ENCODE measurements at regions of chr4 and their contacts with region 1.

Region 1: GRCh38 chr4:39458505-39459300 is at the starts of genes LIAS and RPL9:
- DNase-seq: peak; percentile 91 to 99 (median 95)
- ATAC-seq: peak; percentile 95
- H3K4me3 ChIP-seq: peak within 1 kb of the TSS; percentile 82
- H3K27ac ChIP-seq: peak within 1 kb of the TSS; percentile 93
- H3K4me1 ChIP-seq: peaks cover 3 to 12% of the 10 kb centered on the region in 2 experiments; a peak in 4 of 5 replicates
- H3K27me3 ChIP-seq: no peaks in the 10 kb centered on the region
- CTCF ChIP-seq: no peak; a peak in 1 of 6 replicates
- EP300 ChIP-seq: peak; percentile 56; the same call in 1 of the 2 replicates
- POLR2A ChIP-seq: peak; percentile 99
- RAD21 ChIP-seq: no peak
- polyA plus RNA-seq, gene LIAS: 40.3 to 56.6 TPM
- polyA plus RNA-seq, gene RPL9: 3,844 to 3,942 TPM

Region 2: DNA sequence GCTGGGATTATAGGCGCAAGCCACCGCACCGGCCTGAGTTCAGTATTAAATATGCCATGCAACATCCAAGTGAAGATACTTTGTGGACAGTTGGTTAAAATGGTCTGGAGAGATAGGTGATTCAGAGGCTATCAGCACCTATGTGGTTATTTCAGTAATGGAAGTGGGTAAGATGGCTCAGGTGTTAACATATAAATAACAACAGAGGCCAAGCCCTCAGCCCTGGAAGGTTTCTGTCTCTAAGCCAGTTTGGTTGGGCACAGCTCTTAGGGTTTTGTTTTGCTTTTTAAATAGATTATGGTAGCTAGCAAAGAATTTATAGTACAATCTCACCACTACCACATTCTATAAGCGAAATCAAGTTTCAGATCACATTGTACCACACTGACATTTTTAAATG is 574.4 kb before region 1 on chr4:
- CTCF ChIA-PET with region 1: no interaction called
- POLR2A ChIA-PET with region 1: no interaction called
- in situ Hi-C with region 1: no loop called
- intact Hi-C with region 1: no loop called
- DNase-seq: no peak
- ATAC-seq: no peak
- H3K4me3 ChIP-seq: no peak overlapping the region
- H3K27ac ChIP-seq: no peak overlapping the region
- H3K4me1 ChIP-seq: no peaks in the 10 kb centered on the region; a peak in 1 of 5 replicates
- H3K27me3 ChIP-seq: no peaks in the 10 kb centered on the region
- CTCF ChIP-seq: no peak
- EP300 ChIP-seq: no peak
- POLR2A ChIP-seq: no peak
- RAD21 ChIP-seq: no peak

Region 3: GRCh38 chr4:38894340-38894982 is 564.2 kb before region 1 on chr4:
- CTCF ChIA-PET with region 1: no interaction called
- POLR2A ChIA-PET with region 1: no interaction called
- in situ Hi-C with region 1: no loop called
- intact Hi-C with region 1: loop called (anchors 10 kb)
- DNase-seq: no peak
- ATAC-seq: no peak
- H3K4me3 ChIP-seq: no peak overlapping the region
- H3K27ac ChIP-seq: no peak overlapping the region
- H3K4me1 ChIP-seq: no peaks in the 10 kb centered on the region
- H3K27me3 ChIP-seq: no peaks in the 10 kb centered on the region
- CTCF ChIP-seq: 0 out of 6 replicates have a peak, but pooled peaks of 2 of the 3 experiments have one; percentile 2
- EP300 ChIP-seq: no peak
- POLR2A ChIP-seq: no peak
- RAD21 ChIP-seq: no peak

Region 4: DNA sequence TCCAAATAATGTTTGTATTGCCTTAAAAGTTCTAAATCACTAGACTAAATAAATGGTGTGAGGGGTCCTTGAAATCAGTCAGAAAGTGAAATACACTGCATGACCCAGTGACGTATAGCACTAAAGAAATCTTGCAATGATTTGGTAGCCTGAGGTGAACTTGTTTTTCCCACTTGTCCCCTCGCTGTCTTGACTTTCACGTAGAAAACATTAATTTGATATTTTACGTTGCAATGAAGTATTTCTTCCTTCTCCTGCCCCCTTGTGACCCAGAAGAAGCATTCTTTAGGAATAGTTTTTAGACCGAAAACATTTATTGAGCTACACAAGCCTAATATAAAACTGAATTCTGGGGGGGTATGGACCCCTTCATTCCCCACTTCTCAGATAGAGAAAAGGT is 48.3 kb before region 1 on chr4:
- CTCF ChIA-PET with region 1: no interaction called
- POLR2A ChIA-PET with region 1: no interaction called
- in situ Hi-C with region 1: no loop called
- intact Hi-C with region 1: no loop called
- DNase-seq: no peak
- ATAC-seq: peak; percentile 34; the same call in 2 of the 3 replicates
- H3K4me3 ChIP-seq: no peak overlapping the region
- H3K27ac ChIP-seq: no peak overlapping the region
- H3K4me1 ChIP-seq: no peaks in the 10 kb centered on the region
- H3K27me3 ChIP-seq: no peaks in the 10 kb centered on the region
- CTCF ChIP-seq: peak in 1 of 3 experiments; percentile 44; a peak in 3 of 6 replicates
- EP300 ChIP-seq: no peak
- POLR2A ChIP-seq: no peak
- RAD21 ChIP-seq: peak; percentile 25 to 32; a peak in 1 of 4 replicates

Region 5: DNA sequence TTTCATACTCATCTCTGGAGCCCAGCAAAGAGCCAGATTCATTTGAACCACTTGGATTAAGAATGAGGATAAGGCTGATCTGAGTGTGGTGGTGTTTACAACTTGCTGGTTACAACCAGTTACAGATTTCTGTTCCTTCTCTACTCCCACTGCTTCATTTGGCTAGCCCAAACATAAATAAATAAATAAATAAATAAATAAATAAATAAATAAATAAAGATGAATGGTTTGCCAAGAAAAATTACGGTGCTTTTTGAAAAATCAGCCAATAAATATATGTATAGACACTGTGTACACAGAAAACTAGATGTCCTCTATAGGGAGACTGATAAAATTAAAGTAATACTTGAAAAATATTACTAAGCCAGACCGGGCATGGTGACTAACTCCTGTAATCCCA is 17.1 kb before region 1 on chr4:
- CTCF ChIA-PET with region 1: no interaction called
- POLR2A ChIA-PET with region 1: interaction called, 13 read pairs
- in situ Hi-C with region 1: no loop called
- intact Hi-C with region 1: no loop called
- DNase-seq: no peak
- ATAC-seq: no peak
- H3K4me3 ChIP-seq: no peak overlapping the region
- H3K27ac ChIP-seq: no peak overlapping the region
- H3K4me1 ChIP-seq: peaks cover 0 to 3% of the 10 kb centered on the region in 2 experiments; a peak in 1 of 5 replicates
- H3K27me3 ChIP-seq: peaks cover 0 to 6% of the 10 kb centered on the region in 2 experiments; a peak in 2 of 5 replicates
- CTCF ChIP-seq: no peak
- EP300 ChIP-seq: no peak
- POLR2A ChIP-seq: no peak
- RAD21 ChIP-seq: no peak